PC-9 (cell line): ENCODE measurements at regions of chr17 and their contacts with region 1.

Region 1: DNA sequence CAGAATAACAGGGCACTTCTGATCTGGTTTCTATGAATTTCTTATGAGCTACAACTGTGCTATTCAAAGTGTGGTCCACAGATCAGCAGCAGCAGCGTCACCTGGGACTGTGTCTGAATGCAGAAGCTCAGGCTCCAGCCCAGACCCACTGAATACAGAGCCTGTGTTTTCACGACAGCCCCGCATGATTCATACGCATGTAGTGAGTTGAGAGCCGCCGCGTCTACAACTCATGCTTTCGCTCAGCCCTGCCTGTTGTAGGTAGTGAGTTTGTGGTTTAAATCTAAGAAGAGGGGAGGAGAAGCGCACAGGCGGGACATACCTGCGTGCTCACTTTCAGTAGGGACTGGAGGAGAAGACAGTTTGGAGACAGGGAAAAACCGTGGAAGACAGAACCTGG is 28.5 kb upstream of the ELAC2 start:
- DNase-seq: no peak
- H3K4me3 ChIP-seq: no peak overlapping the region
- H3K27ac ChIP-seq: no peak overlapping the region
- H3K4me1 ChIP-seq: no peaks in the 10 kb centered on the region
- H3K27me3 ChIP-seq: peaks cover 84% of the 10 kb centered on the region
- CTCF ChIP-seq: no peak

Region 2: DNA sequence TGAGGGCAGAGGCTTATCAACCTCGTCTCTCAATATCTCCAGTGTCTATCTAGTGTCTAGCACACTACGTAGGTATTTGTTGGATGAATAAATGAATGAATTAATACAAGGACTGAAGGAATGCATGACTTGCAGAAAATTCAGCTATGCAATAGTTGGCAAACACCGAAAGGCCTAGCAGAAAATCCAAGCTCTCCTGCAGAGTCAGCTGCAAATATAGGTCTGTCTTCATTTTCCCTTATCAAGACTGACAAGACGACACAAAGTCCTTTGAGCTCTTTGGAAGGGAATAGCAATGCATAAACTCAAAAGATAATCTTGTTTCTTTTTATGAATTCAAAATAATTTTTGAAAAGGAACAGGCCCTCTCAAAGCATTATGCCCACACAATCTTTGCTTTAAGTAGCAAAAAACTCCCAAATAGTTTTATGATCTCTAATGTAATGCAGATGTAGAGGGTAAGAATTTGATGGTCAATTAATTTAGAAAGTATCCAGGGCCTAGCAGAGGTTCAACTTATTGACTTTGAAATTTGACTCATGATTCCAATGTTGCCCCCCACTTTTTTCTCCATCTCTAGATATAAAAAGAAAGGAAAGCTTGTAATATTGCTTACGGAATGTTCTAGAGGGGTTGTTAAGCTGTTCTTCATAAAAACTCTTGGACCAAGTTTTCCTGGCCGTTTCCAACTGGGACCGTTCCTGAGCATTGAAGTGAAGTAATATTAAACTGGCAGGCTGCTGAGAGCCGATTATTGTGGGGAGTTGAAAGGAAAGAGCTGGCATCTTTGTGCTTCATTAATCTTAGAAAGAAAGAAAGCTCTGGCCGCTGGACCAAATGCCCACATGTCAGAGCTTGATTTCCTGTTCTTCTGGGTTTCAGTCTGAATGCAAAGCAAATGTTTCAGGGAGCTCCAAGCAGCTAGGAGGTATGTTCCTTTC is 328.1 kb after region 1 on chr17:
- CTCF ChIA-PET with region 1: no interaction called
- POLR2A ChIA-PET with region 1: interaction called, 13 read pairs
- intact Hi-C with region 1: no loop called
- DNase-seq: no peak
- H3K4me3 ChIP-seq: no peak overlapping the region
- H3K27ac ChIP-seq: no peak overlapping the region
- H3K4me1 ChIP-seq: no peaks in the 10 kb centered on the region
- H3K27me3 ChIP-seq: no peaks in the 10 kb centered on the region
- CTCF ChIP-seq: no peak

Region 3: DNA sequence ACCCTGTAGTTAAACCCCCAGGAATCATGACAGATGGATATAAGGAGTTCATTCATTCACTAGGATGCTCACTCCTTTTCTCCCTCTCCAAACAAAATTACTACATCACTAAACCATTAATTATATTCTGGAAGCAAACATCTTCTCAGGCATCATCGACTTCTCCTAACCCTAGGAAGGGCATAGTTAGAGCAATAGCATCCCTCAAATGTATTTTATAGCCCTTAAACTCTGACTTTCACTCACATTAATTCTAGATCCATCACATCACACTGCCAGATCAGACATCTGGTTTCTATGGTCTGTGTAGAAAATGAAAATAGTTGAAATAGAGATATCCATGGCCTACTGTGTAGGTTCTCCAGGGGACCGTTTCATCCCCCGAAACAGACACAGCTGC is 411.4 kb after region 1 on chr17:
- CTCF ChIA-PET with region 1: no interaction called
- POLR2A ChIA-PET with region 1: no interaction called
- intact Hi-C with region 1: no loop called
- DNase-seq: no peak
- H3K4me3 ChIP-seq: no peak overlapping the region
- H3K27ac ChIP-seq: no peak overlapping the region
- H3K4me1 ChIP-seq: no peaks in the 10 kb centered on the region
- H3K27me3 ChIP-seq: no peaks in the 10 kb centered on the region
- CTCF ChIP-seq: no peak